ENCODE measurements at regions of chr14 and their contacts with region 1.

Region 1: DNA sequence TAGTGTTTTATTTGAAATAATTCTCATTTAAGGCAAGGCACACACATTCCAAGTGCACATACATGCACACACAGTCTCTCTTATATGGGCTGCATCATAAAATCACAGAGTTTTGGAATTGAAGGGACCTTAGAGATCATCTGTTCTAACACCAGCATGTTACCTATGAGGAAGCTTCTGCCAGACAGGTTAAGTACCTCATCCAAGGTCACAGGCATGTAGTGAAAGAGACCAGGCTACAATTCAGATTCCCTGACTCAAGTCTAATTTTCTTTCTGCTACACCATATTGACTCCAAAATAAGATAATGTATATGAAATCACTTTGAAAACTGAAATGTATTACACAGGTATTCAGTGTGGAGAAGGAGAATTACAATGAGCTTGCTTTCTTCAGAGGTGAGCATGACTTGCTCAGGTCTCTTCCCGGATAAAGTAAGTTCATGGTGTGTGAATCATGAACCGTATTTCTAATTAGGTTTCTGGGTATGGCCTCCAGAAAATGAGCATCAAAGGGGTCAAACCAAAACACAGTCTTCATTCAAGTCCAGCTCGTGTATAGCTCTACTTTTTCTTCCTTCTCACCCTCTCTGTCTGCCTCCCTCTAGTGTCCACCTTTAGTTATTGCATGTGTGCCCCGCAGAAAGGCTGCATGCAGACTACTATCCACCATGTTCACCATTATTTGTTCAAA is 411.9 kb downstream of the FUT8 start:
- DNase-seq: peak in 2 of 5 donors; percentile 30 to 41
- ATAC-seq: peak in 3 of 4 donors; percentile 76 to 82 (median 80)
- H3K4me3 ChIP-seq: no peak overlapping the region
- H3K27ac ChIP-seq: no peak overlapping the region
- H3K4me1 ChIP-seq: no peaks in the 10 kb centered on the region
- H3K27me3 ChIP-seq: peaks cover 0 to 12% (median 6%) of the 10 kb centered on the region in 9 donors
- CTCF ChIP-seq: peak; percentile 86 to 96 (median 90)
- POLR2A ChIP-seq: no peak

Region 2: GRCh38 chr14:65024957-65025356 is 799.5 kb before region 1 on chr14:
- intact Hi-C with region 1: no loop called
- DNase-seq: no peak
- ATAC-seq: peak in 1 of 4 donors; percentile 31
- H3K4me3 ChIP-seq: no peak overlapping the region
- H3K27ac ChIP-seq: peak overlapping the region in 1 of 12 donors; percentile 56
- H3K4me1 ChIP-seq: peaks cover 0 to 4% (median 2%) of the 10 kb centered on the region in 12 donors
- H3K27me3 ChIP-seq: no peaks in the 10 kb centered on the region
- CTCF ChIP-seq: no peak
- POLR2A ChIP-seq: no peak

Region 3: GRCh38 chr14:65169351-65169750 is 655.1 kb before region 1 on chr14:
- intact Hi-C with region 1: loop called in 8 of 10 experiments (anchors 1 to 5 kb)
- DNase-seq: no peak
- ATAC-seq: peak; percentile 28 to 83 (median 68)
- H3K4me3 ChIP-seq: no peak overlapping the region
- H3K27ac ChIP-seq: peak overlapping the region in 7 of 12 donors; percentile 32 to 54 (median 46)
- H3K4me1 ChIP-seq: peaks cover 0 to 11% (median 2%) of the 10 kb centered on the region in 12 donors
- H3K27me3 ChIP-seq: peaks cover 0 to 16% (median 6%) of the 10 kb centered on the region in 9 donors
- CTCF ChIP-seq: no peak
- POLR2A ChIP-seq: no peak

Region 4: GRCh38 chr14:65214741-65215140 is 609.7 kb before region 1 on chr14:
- intact Hi-C with region 1: loop called in 1 of 10 experiments (anchors 5 kb)
- DNase-seq: peak in 3 of 5 donors; percentile 20 to 45 (median 42)
- ATAC-seq: peak; percentile 47 to 86 (median 74)
- H3K4me3 ChIP-seq: no peak overlapping the region
- H3K27ac ChIP-seq: no peak overlapping the region
- H3K4me1 ChIP-seq: peaks cover 0 to 20% (median 0%) of the 10 kb centered on the region in 12 donors
- H3K27me3 ChIP-seq: no peaks in the 10 kb centered on the region
- CTCF ChIP-seq: no peak
- POLR2A ChIP-seq: no peak

Region 5: GRCh38 chr14:66038618-66039017 is 214.2 kb after region 1 on chr14:
- intact Hi-C with region 1: no loop called
- DNase-seq: peak in 3 of 5 donors; percentile 16 to 42 (median 34)
- ATAC-seq: peak; percentile 69 to 92 (median 91)
- H3K4me3 ChIP-seq: no peak overlapping the region
- H3K27ac ChIP-seq: peak overlapping the region in 3 of 12 donors; percentile 31 to 43 (median 42)
- H3K4me1 ChIP-seq: peaks cover 0 to 17% (median 0%) of the 10 kb centered on the region in 12 donors
- H3K27me3 ChIP-seq: no peaks in the 10 kb centered on the region
- CTCF ChIP-seq: peak in 1 of 12 donors; percentile 8
- POLR2A ChIP-seq: no peak